Calu3 (cell line): ENCODE measurements at regions of chr6 and their contacts with region 1.

Region 1: DNA sequence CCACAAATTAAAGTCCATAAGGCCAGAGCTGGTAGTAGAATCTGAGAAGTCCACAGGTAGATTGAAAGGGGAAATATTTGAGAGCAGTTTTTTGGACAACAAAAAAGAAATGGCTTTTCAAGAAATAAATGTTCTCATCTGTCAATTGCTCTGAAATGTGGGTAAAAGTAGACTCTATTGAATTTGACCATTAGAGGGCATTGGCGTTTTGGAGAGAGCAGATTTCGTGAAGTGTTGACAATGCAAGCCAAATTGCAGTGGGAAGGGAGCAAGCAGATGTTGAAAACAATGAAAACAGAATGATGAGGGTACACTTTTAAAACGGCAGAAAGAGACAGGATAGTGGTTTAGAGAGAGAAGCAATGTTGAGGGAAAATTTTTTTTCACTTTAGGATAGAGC is 149.1 kb upstream of the FAM83B start:
- DNase-seq: peak; percentile 19
- H3K4me3 Mint-ChIP-seq: no peak overlapping the region
- H3K27ac Mint-ChIP-seq: peak overlapping the region; percentile 1
- H3K4me1 Mint-ChIP-seq: peaks cover 31% of the 10 kb centered on the region
- H3K27me3 Mint-ChIP-seq: no peaks in the 10 kb centered on the region
- CTCF ChIP-seq: no peak

Region 2: GRCh38 chr6:53979468-53980067 is 717.9 kb before region 1 on chr6:
- CTCF ChIA-PET with region 1: interaction called, 3 read pairs
- intact Hi-C with region 1: loop called (anchors 5 kb)
- DNase-seq: peak; percentile 43
- H3K4me3 Mint-ChIP-seq: no peak overlapping the region
- H3K27ac Mint-ChIP-seq: no peak overlapping the region
- H3K4me1 Mint-ChIP-seq: peaks cover 37% of the 10 kb centered on the region
- H3K27me3 Mint-ChIP-seq: no peaks in the 10 kb centered on the region
- CTCF ChIP-seq: peak; percentile 72

Region 3: DNA sequence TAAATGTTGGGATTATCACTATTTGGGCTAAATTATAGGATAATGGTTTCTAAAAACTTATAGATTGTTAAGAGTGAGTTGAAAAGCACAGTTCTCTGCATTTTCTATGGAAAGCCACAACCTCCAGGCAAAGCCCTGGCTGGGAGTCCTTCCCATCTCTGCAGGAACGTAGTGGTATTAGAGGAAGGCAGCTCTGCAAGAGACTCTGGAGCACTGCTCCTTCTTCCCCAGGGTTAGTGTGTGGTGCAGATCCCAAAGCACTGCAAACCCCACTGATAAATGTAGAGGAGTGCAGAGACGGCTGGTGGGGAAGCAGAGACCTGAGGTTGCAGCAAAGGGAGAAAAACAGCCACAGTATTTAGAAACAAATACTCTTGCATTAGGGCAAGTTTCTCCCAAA is 163.9 kb before region 1 on chr6:
- CTCF ChIA-PET with region 1: no interaction called
- intact Hi-C with region 1: no loop called
- DNase-seq: no peak
- H3K4me3 Mint-ChIP-seq: no peak overlapping the region
- H3K27ac Mint-ChIP-seq: no peak overlapping the region
- H3K4me1 Mint-ChIP-seq: no peaks in the 10 kb centered on the region
- H3K27me3 Mint-ChIP-seq: no peaks in the 10 kb centered on the region
- CTCF ChIP-seq: no peak

Region 4: GRCh38 chr6:54860739-54861138 is 163.3 kb after region 1 on chr6:
- CTCF ChIA-PET with region 1: no interaction called
- intact Hi-C with region 1: loop called (anchors 5 kb)
- DNase-seq: peak; percentile 69
- H3K4me3 Mint-ChIP-seq: peak overlapping the region; percentile 64
- H3K27ac Mint-ChIP-seq: peak overlapping the region; percentile 98
- H3K4me1 Mint-ChIP-seq: peaks cover 74% of the 10 kb centered on the region
- H3K27me3 Mint-ChIP-seq: no peaks in the 10 kb centered on the region
- CTCF ChIP-seq: no peak

Region 5: GRCh38 chr6:54992789-54993188 is 295.4 kb after region 1 on chr6:
- CTCF ChIA-PET with region 1: interaction called, 4 read pairs
- intact Hi-C with region 1: loop called (anchors 5 kb)
- DNase-seq: no peak
- H3K4me3 Mint-ChIP-seq: no peak overlapping the region
- H3K27ac Mint-ChIP-seq: no peak overlapping the region
- H3K4me1 Mint-ChIP-seq: peaks cover 17% of the 10 kb centered on the region
- H3K27me3 Mint-ChIP-seq: no peaks in the 10 kb centered on the region
- CTCF ChIP-seq: peak; percentile 55

Region 6: DNA sequence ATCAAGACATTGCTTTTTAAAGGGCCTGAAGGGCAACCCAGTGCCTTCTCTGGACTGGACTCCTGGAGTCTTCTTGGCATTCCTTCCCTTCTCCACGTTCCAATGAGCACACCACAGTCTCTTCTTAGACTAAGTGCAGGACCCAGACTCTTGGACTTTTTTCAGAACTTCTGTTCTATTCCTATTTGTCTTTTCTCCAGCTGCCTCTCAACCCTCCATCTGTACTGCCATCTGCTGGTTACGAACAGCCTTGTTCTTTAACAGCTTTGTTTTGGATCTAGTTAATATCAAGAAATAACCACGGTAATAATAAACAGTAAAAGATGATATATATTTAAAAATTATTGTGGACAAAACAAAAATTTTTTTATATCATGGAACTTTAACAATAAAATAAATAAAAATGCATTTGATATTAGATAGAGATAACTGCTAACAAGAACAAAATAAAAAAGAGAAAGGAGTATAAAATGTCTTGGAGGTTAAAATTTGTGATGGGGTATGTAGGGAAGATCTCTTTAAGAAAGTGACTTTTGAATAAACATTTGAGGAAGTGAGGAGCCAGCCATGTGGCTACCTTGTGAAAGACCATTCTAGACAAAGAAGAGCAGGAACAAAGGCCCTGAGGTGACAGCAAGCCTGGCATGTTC is 371.8 kb after region 1 on chr6:
- CTCF ChIA-PET with region 1: interaction called, 6 read pairs
- intact Hi-C with region 1: loop called (anchors 1 kb)
- DNase-seq: peak; percentile 52
- H3K4me3 Mint-ChIP-seq: no peak overlapping the region
- H3K27ac Mint-ChIP-seq: no peak overlapping the region
- H3K4me1 Mint-ChIP-seq: no peaks in the 10 kb centered on the region
- H3K27me3 Mint-ChIP-seq: no peaks in the 10 kb centered on the region
- CTCF ChIP-seq: peak; percentile 54

Region 7: DNA sequence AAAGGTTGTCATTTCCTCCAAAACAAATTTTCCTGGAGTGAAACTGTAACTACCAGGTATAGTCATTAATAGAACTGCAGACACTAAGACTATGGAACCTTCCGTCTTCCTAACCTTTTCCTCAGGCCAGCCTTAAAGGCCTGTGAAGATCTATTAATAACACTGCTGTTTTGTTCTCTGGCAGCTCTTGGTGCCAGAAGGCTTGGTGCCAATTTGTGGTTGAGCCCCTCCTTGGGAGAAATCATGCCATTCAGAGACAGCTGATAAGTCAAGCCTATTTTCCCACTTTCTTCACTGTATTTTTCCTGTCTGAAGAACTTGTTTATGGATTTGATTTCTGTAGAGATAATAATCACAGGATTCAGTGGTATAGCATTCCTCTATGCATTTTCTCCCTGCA is 541.7 kb after region 1 on chr6:
- CTCF ChIA-PET with region 1: interaction called, 3 read pairs
- intact Hi-C with region 1: loop called (anchors 2 kb)
- DNase-seq: peak; percentile 50
- H3K4me3 Mint-ChIP-seq: no peak overlapping the region
- H3K27ac Mint-ChIP-seq: no peak overlapping the region
- H3K4me1 Mint-ChIP-seq: peaks cover 23% of the 10 kb centered on the region
- H3K27me3 Mint-ChIP-seq: no peaks in the 10 kb centered on the region
- CTCF ChIP-seq: no peak